Mucosa of descending colon (tissue), 3 donors: ENCODE measurements at regions of chrX and their contacts with region 1.

Region 1: DNA sequence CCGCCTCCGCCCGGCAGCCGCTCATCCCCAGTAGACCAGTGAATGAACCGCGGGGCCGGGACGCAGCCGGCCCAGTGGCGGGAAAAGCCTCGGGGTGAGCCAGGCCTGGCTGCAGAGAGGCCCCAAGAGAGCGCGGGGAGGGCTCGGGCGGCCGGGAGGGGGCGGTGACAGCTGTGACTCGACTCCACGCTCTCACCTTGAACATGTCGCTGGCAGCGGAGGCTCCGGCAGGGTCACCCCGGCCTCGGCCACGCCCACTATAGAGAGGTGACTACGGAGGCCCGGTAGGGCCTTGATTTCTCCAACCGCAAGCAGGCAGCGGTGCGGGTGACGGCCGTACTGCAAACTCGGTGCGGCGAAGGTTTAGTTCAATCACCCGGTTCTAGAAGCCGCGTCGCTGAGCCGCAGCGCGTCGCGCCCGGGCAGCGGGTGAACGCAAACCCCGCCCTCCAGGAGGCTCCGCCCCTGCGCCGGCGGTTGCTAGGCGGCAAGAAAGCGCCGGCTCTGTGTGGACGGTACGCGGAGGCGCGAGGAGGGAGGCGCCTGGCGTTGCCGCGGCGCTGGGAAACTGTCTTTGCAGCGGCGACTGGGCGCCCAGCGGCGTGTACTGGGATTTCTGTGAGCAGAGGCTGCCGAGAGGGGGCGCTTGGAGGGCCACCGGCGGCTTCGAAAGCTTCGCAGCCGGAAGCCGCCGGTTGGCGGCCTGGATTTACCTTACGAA is at the starts of genes APOO and CXorf58:
- DNase-seq: peak; percentile 90 to 95 (median 94)
- ATAC-seq: peak; percentile 96
- H3K4me3 ChIP-seq: peak within 1 kb of the TSS; percentile 30
- H3K4me1 ChIP-seq: no peaks in the 10 kb centered on the region
- CTCF ChIP-seq: peak; percentile 70
- total RNA-seq, gene APOO: 19.2 to 38.7 (median 36.6) TPM
- total RNA-seq, gene CXorf58: not detected

Region 2: GRCh38 chrX:23694606-23695005 is 213.1 kb before region 1 on chrX:
- intact Hi-C with region 1: loop called (anchors 10 kb)
- DNase-seq: peak in 2 of 3 donors; percentile 31 to 56
- ATAC-seq: peak; percentile 73
- H3K4me3 ChIP-seq: no peak overlapping the region
- H3K4me1 ChIP-seq: no peaks in the 10 kb centered on the region
- CTCF ChIP-seq: peak; percentile 22

Region 3: DNA sequence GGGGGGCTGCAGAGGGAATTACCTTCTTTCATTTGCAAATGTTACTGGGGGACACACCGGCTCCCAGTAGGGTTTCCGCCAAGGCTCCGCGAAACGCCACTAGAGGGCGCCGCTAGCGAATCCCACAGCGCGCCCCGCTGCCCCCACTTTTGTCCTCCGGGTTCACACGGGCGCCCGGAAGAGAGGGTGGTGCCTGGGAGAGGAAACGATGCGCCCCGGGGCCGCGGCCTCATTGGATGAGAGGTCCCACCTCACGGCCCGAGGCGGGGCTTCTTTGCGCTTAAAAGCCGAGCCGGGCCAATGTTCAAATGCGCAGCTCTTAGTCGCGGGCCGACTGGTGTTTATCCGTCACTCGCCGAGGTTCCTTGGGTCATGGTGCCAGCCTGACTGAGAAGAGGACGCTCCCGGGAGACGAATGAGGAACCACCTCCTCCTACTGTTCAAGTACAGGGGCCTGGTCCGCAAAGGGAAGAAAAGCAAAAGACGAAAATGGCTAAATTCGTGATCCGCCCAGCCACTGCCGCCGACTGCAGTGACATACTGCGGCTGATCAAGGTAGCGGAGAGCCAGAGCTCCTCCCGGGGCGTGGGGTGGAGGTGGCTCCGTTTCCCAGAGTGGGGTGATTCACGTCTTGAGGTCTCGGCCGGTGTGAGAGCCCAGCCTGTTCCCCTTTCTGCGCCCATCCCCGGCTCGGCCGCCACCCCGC is 124.6 kb before region 1 on chrX and contains the start of gene SAT1:
- intact Hi-C with region 1: loop called in 1 of 2 experiments (anchors 10 kb)
- DNase-seq: peak; percentile 95 to 98 (median 96)
- ATAC-seq: peak; percentile 93
- H3K4me3 ChIP-seq: peak within 1 kb of the TSS; percentile 57
- H3K4me1 ChIP-seq: no peaks in the 10 kb centered on the region
- CTCF ChIP-seq: peak; percentile 54
- total RNA-seq, gene SAT1: 267 to 574 (median 449) TPM